ENCODE measurements at regions of chr2 and their contacts with region 1.

Region 1: GRCh38 chr2:202634556-202635427 is at the start of gene FAM117B:
- DNase-seq: peak; percentile 92
- ATAC-seq: peak; percentile 88
- H3K4me3 Mint-ChIP-seq: peak within 1 kb of the TSS; percentile 95
- H3K27ac Mint-ChIP-seq: peak within 1 kb of the TSS; percentile 100
- H3K4me1 Mint-ChIP-seq: peaks cover 53% of the 10 kb centered on the region
- H3K27me3 Mint-ChIP-seq: no peaks in the 10 kb centered on the region
- CTCF ChIP-seq: no peak
- total RNA-seq, gene FAM117B: 21.3 and 22.5 TPM in 2 replicates

Region 2: DNA sequence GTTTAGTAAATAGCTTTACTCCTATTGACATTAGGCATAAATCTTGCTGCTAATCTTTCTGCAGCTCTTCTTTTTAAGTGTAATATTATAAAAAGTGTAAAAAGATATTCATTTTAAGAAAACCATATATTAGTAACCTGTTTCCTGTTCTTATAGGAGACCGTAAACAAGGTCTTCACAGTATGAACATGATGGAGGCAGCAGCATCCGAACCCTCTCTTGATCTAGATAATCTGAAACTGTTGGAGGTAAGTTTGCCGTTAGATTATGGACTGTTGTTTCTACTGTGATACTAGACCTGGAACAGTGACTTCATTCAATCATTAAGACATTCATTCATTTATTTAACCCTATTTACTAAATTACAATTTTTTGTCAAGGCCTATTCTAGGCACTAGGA is 120.1 kb before region 1 on chr2:
- CTCF ChIA-PET with region 1: no interaction called
- POLR2A ChIA-PET with region 1: no interaction called
- intact Hi-C with region 1: no loop called
- DNase-seq: no peak
- ATAC-seq: no peak
- H3K4me3 Mint-ChIP-seq: no peak overlapping the region
- H3K27ac Mint-ChIP-seq: no peak overlapping the region
- H3K4me1 Mint-ChIP-seq: no peaks in the 10 kb centered on the region
- H3K27me3 Mint-ChIP-seq: no peaks in the 10 kb centered on the region
- CTCF ChIP-seq: no peak

Region 3: DNA sequence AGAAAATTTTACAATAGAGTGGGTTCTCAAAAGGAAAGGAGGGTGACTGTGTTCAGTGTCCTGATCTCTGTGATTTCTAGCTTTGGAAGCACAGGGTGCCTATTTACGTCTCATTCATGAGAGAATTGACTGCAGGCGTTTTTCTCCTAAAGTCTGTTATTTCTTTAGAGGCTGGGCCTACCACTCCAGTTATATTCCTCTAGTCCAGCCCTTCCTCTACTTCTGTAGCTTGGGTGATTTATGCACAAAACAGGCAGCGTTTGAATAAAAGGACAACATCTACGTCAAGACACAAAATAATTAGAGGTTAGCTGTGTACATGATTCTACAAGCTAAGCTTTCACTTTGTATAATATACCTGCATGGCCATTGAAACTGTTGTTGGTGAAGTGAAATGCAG is 32.5 kb before region 1 on chr2:
- CTCF ChIA-PET with region 1: no interaction called
- POLR2A ChIA-PET with region 1: interaction called, 27 read pairs
- intact Hi-C with region 1: no loop called
- DNase-seq: no peak
- ATAC-seq: no peak
- H3K4me3 Mint-ChIP-seq: no peak overlapping the region
- H3K27ac Mint-ChIP-seq: no peak overlapping the region
- H3K4me1 Mint-ChIP-seq: peaks cover 24% of the 10 kb centered on the region
- H3K27me3 Mint-ChIP-seq: no peaks in the 10 kb centered on the region
- CTCF ChIP-seq: no peak

Region 4: GRCh38 chr2:202660796-202661195 is 26.0 kb after region 1 on chr2:
- CTCF ChIA-PET with region 1: no interaction called
- POLR2A ChIA-PET with region 1: interaction called, 117 read pairs
- intact Hi-C with region 1: no loop called
- DNase-seq: no peak
- ATAC-seq: no peak
- H3K4me3 Mint-ChIP-seq: no peak overlapping the region
- H3K27ac Mint-ChIP-seq: no peak overlapping the region
- H3K4me1 Mint-ChIP-seq: peaks cover 89% of the 10 kb centered on the region
- H3K27me3 Mint-ChIP-seq: no peaks in the 10 kb centered on the region
- CTCF ChIP-seq: no peak

Region 5: GRCh38 chr2:202750763-202751427 is 116.1 kb after region 1 on chr2:
- CTCF ChIA-PET with region 1: interaction called, 3 read pairs
- POLR2A ChIA-PET with region 1: interaction called, 56 read pairs
- intact Hi-C with region 1: loop called (anchors 1 kb)
- DNase-seq: no peak
- ATAC-seq: peak; percentile 85
- H3K4me3 Mint-ChIP-seq: peak overlapping the region; percentile 54
- H3K27ac Mint-ChIP-seq: peak overlapping the region; percentile 92
- H3K4me1 Mint-ChIP-seq: peaks cover 51% of the 10 kb centered on the region
- H3K27me3 Mint-ChIP-seq: no peaks in the 10 kb centered on the region
- CTCF ChIP-seq: no peak

Region 6: DNA sequence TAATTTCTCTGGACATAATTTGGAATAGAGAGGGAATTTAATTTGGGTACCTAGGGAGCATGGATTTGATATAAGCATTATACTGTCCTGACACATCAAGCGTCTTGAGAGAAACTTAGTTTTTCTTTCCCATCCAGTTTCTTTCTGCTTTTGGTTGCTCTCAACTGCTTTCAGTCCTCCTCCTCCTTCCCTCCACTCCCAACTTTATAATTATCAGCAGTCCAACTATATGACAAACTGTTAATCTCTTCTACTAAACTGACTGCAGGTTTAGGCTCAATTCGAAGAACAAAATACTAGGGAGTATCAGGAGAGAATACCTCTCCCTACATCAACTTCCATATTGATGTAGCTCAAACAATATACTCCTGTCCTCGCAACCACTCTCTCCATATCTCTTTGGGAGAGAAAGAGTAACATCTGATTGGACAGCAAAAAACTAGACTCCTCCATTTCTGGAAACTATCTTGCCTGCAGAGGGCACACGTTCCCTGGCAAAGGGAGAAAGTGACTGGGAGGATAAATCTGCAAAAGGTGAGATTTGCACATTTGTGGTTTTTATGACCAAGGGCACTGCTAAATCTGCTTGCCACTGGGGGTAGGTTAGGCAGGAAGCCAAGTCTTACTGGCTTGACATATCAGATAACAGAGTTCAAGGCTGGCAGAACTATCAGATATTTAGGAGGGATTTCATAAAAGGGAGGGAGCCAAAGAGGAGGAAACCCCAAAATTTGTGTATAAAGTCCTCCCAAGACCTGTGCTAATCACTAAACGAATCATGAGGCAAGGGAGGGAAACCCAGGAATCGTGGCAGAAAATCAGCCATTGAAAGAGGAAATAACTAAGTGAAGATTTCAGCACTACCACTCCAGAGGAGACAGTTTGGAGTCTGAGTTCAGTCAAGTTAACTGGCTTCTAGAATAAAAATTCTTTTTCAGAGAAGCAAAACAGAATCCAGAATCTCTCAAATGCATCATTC is 196.7 kb after region 1 on chr2:
- CTCF ChIA-PET with region 1: no interaction called
- POLR2A ChIA-PET with region 1: no interaction called
- intact Hi-C with region 1: no loop called
- DNase-seq: no peak
- ATAC-seq: peak; percentile 58
- H3K4me3 Mint-ChIP-seq: no peak overlapping the region
- H3K27ac Mint-ChIP-seq: no peak overlapping the region
- H3K4me1 Mint-ChIP-seq: peaks cover 9% of the 10 kb centered on the region
- H3K27me3 Mint-ChIP-seq: no peaks in the 10 kb centered on the region
- CTCF ChIP-seq: no peak

Region 7: GRCh38 chr2:202870431-202871299 is 235.9 kb after region 1 on chr2:
- CTCF ChIA-PET with region 1: interaction called, 3 read pairs
- POLR2A ChIA-PET with region 1: interaction called, 36 read pairs
- intact Hi-C with region 1: loop called (anchors 1 kb)
- DNase-seq: peak; percentile 53
- ATAC-seq: peak; percentile 81
- H3K4me3 Mint-ChIP-seq: peak overlapping the region; percentile 92
- H3K27ac Mint-ChIP-seq: peak overlapping the region; percentile 81
- H3K4me1 Mint-ChIP-seq: peaks cover 5% of the 10 kb centered on the region
- H3K27me3 Mint-ChIP-seq: no peaks in the 10 kb centered on the region
- CTCF ChIP-seq: peak; percentile 12

Region 8: GRCh38 chr2:203238704-203239526 is 604.1 kb after region 1 on chr2 and contains the start of gene CYP20A1:
- CTCF ChIA-PET with region 1: no interaction called
- POLR2A ChIA-PET with region 1: interaction called, 3 read pairs
- intact Hi-C with region 1: loop called (anchors 1 kb)
- DNase-seq: peak; percentile 98
- ATAC-seq: peak; percentile 85
- H3K4me3 Mint-ChIP-seq: peak within 1 kb of the TSS; percentile 96
- H3K27ac Mint-ChIP-seq: peak within 1 kb of the TSS; percentile 95
- H3K4me1 Mint-ChIP-seq: peaks cover 32% of the 10 kb centered on the region
- H3K27me3 Mint-ChIP-seq: no peaks in the 10 kb centered on the region
- CTCF ChIP-seq: no peak
- total RNA-seq, gene CYP20A1: 24.0 and 32.2 TPM in 2 replicates

Measured in activated B cell treated with CpG ODN at 0.5 μM for 24 hours (primary cell).